A673 (cell line): ENCODE measurements at regions of chr18 and their contacts with region 1.

Region 1: GRCh38 chr18:57434536-57435494 is at the start of gene ONECUT2:
- DNase-seq: peak; percentile 97
- H3K4me3 ChIP-seq: peak within 1 kb of the TSS; percentile 45
- H3K27ac ChIP-seq: no peak within 1 kb of the TSS
- H3K4me1 ChIP-seq: peaks cover 18% of the 10 kb centered on the region
- H3K27me3 ChIP-seq: peaks cover 91% of the 10 kb centered on the region
- CTCF ChIP-seq: no peak
- total RNA-seq, gene ONECUT2: 0.66 and 1.2 TPM in 2 replicates

Region 2: DNA sequence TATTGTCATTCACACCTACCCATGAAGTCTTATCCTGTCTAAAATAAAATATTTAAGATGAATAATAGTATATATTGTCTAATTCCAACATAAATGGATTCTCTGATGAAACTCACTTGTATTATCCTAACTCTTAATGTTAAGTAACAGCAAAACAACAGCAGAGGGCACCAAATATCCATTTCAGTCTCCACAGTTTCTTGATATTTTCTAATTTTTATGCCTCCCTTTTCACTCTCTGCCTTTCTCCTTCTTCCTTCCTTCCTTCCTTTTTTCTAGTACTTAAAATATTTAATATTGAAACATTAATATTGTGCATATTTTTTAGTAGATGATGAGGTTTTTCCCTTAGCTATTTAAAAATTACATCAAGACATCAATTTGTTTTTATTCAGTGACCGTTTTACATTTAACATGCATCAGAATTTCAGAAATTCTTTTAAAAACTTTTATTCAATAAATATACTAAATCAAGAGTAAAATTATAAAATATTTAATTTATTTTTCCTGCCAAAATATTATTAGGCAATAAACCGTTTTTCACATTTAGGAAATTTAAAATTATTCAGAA is 686.0 kb before region 1 on chr18:
- CTCF ChIA-PET with region 1: no interaction called
- POLR2A ChIA-PET with region 1: no interaction called
- intact Hi-C with region 1: loop called (anchors 5 kb)
- DNase-seq: peak; percentile 62
- H3K4me3 ChIP-seq: no peak overlapping the region
- H3K27ac ChIP-seq: no peak overlapping the region
- H3K4me1 ChIP-seq: no peaks in the 10 kb centered on the region
- H3K27me3 ChIP-seq: no peaks in the 10 kb centered on the region
- CTCF ChIP-seq: peak; percentile 69

Region 3: GRCh38 chr18:56789004-56789888 is 645.6 kb before region 1 on chr18:
- CTCF ChIA-PET with region 1: no interaction called
- POLR2A ChIA-PET with region 1: no interaction called
- intact Hi-C with region 1: loop called (anchors 10 kb)
- DNase-seq: peak; percentile 53
- H3K4me3 ChIP-seq: no peak overlapping the region
- H3K27ac ChIP-seq: no peak overlapping the region
- H3K4me1 ChIP-seq: no peaks in the 10 kb centered on the region
- H3K27me3 ChIP-seq: no peaks in the 10 kb centered on the region
- CTCF ChIP-seq: peak; percentile 75

Region 4: GRCh38 chr18:56869189-56869777 is 565.5 kb before region 1 on chr18:
- CTCF ChIA-PET with region 1: interaction called, 3 read pairs
- POLR2A ChIA-PET with region 1: no interaction called
- intact Hi-C with region 1: loop called (anchors 5 kb)
- DNase-seq: peak; percentile 70
- H3K4me3 ChIP-seq: no peak overlapping the region
- H3K27ac ChIP-seq: no peak overlapping the region
- H3K4me1 ChIP-seq: no peaks in the 10 kb centered on the region
- H3K27me3 ChIP-seq: no peaks in the 10 kb centered on the region
- CTCF ChIP-seq: peak; percentile 79

Region 5: GRCh38 chr18:57004366-57005121 is 430.3 kb before region 1 on chr18:
- CTCF ChIA-PET with region 1: no interaction called
- POLR2A ChIA-PET with region 1: no interaction called
- intact Hi-C with region 1: loop called (anchors 5 kb)
- DNase-seq: peak; percentile 74
- H3K4me3 ChIP-seq: no peak overlapping the region
- H3K27ac ChIP-seq: peak overlapping the region; percentile 53
- H3K4me1 ChIP-seq: peaks cover 58% of the 10 kb centered on the region
- H3K27me3 ChIP-seq: no peaks in the 10 kb centered on the region
- CTCF ChIP-seq: no peak

Region 6: GRCh38 chr18:57188851-57189557 is 245.8 kb before region 1 on chr18:
- CTCF ChIA-PET with region 1: no interaction called
- POLR2A ChIA-PET with region 1: no interaction called
- intact Hi-C with region 1: no loop called
- DNase-seq: no peak
- H3K4me3 ChIP-seq: no peak overlapping the region
- H3K27ac ChIP-seq: no peak overlapping the region
- H3K4me1 ChIP-seq: no peaks in the 10 kb centered on the region
- H3K27me3 ChIP-seq: peaks cover 57% of the 10 kb centered on the region
- CTCF ChIP-seq: no peak

Region 7: GRCh38 chr18:57780706-57781347 is 346.0 kb after region 1 on chr18:
- CTCF ChIA-PET with region 1: interaction called, 7 read pairs
- POLR2A ChIA-PET with region 1: interaction called, 10 read pairs
- intact Hi-C with region 1: no loop called
- DNase-seq: peak; percentile 65
- H3K4me3 ChIP-seq: peak overlapping the region; percentile 18
- H3K27ac ChIP-seq: peak overlapping the region; percentile 97
- H3K4me1 ChIP-seq: peaks cover 98% of the 10 kb centered on the region
- H3K27me3 ChIP-seq: no peaks in the 10 kb centered on the region
- CTCF ChIP-seq: no peak